Ovary (tissue), 10 donors: ENCODE measurements at regions of chr3 and their contacts with region 1.

Region 1: DNA sequence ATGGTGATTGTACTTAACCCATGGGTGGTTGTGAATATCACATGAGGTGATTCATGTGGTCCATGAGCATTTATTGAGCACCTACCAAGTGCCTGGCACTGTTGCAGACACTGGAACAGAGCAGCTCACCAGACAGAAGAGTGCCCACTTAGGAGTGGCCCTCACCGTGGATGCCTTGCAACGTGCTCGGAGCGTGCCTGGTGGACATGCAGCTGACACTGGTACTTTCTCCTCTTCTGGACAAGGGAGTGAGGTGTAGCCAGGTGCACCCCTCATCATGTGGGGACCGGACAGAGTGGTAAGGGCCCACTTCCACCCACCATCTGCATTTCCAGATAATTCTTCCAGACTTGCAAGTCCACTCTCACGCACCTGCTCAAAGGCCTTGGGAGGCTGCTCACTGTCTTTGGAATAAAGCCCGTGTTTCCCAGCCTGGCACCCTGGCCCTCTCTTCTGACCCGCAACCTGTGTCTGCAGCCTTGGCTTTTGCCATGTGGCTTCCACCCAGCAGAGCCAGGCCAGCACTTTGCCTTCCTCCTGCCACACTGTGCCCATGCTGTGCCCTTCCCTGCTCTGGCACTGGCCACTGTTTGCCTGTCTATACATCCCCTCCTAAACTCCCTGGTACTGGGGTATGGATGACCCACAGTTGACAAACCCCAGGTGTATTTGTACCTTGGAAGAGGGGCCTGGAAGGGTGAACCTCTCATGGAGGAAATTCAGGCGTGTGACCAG is 90.9 kb upstream of the SEC13 start:
- DNase-seq: no peak
- H3K4me3 ChIP-seq: no peak overlapping the region
- H3K27ac ChIP-seq: no peak overlapping the region
- H3K4me1 ChIP-seq: no peaks in the 10 kb centered on the region
- H3K27me3 ChIP-seq: no peaks in the 10 kb centered on the region
- CTCF ChIP-seq: no peak
- EP300 ChIP-seq: no peak
- POLR2A ChIP-seq: no peak

Region 2: GRCh38 chr3:9448643-9449042 is 963.1 kb before region 1 on chr3:
- intact Hi-C with region 1: loop called in 1 of 4 experiments (anchors 5 kb)
- DNase-seq: no peak
- H3K4me3 ChIP-seq: no peak overlapping the region
- H3K27ac ChIP-seq: no peak overlapping the region
- H3K4me1 ChIP-seq: no peaks in the 10 kb centered on the region
- H3K27me3 ChIP-seq: no peaks in the 10 kb centered on the region
- CTCF ChIP-seq: no peak
- EP300 ChIP-seq: no peak
- POLR2A ChIP-seq: no peak